ENCODE measurements at regions of chr9 and their contacts with region 1.

Region 1: DNA sequence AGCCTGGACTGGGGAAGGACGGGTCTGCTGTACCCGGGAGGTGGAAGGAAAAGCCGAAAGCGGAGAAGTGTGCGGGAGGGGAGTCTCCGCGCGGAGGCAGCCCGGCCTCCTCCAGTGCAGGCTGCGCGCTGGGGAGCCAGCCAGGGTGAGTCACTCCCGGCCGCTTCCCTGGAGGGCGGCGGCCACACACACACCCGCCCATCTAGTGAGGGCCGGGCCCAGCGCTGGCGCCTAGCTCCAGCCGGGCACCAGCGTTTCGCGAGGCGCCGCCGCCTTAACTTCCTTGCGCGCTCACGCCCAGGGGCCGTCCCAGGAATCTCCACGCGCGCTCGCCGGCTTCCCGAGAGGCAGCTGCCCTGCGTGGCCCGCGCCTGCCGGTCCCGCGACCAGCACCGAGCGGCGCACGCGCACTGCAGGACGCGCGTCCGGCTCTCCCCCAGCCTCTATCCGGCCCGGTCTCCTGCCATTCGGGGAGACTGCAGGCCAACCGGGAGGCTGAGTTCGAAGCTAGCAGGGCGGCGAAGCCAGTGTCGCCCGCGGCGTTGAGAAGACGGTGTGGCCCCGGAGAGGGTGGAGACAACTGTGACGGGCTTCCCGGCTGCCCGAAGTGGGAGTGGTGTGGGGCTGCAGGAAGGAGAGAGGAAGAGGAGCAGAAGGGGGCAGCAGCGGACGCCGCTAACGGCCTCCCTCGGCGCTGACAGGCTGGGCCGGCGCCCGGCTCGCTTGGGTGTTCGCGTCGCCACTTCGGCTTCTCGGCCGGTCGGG is at the start of gene JAK2:
- DNase-seq: peak; percentile 73 to 88 (median 76)
- ATAC-seq: peak; percentile 93
- H3K4me3 ChIP-seq: peak within 1 kb of the TSS; percentile 74
- H3K27ac ChIP-seq: peak within 1 kb of the TSS; percentile 90
- H3K4me1 ChIP-seq: peaks cover 14 to 29% of the 10 kb centered on the region in 2 experiments; a peak in 4 of 5 replicates
- H3K27me3 ChIP-seq: no peaks in the 10 kb centered on the region
- CTCF ChIP-seq: peak; percentile 46 to 51 (median 47); a peak in 4 of 6 replicates
- EP300 ChIP-seq: no peak
- POLR2A ChIP-seq: peak; percentile 85
- RAD21 ChIP-seq: peak in 1 of 2 experiments; percentile 6; a peak in 1 of 4 replicates
- polyA plus RNA-seq, gene JAK2: 4.7 to 5.1 TPM

Region 2: GRCh38 chr9:4750023-4750673 is 234.7 kb before region 1 on chr9:
- CTCF ChIA-PET with region 1: interaction called, 3 read pairs
- POLR2A ChIA-PET with region 1: no interaction called
- in situ Hi-C with region 1: loop called (anchors 10 kb)
- intact Hi-C with region 1: no loop called
- DNase-seq: peak; percentile 19 to 69 (median 34)
- ATAC-seq: peak; percentile 86
- H3K4me3 ChIP-seq: no peak overlapping the region
- H3K27ac ChIP-seq: no peak overlapping the region
- H3K4me1 ChIP-seq: peaks cover 0 to 2% of the 10 kb centered on the region in 2 experiments; a peak in 2 of 5 replicates
- H3K27me3 ChIP-seq: no peaks in the 10 kb centered on the region
- CTCF ChIP-seq: peak; percentile 36 to 62 (median 46); a peak in 4 of 6 replicates
- EP300 ChIP-seq: no peak
- POLR2A ChIP-seq: no peak
- RAD21 ChIP-seq: peak; percentile 26 to 74; a peak in 2 of 4 replicates

Region 3: DNA sequence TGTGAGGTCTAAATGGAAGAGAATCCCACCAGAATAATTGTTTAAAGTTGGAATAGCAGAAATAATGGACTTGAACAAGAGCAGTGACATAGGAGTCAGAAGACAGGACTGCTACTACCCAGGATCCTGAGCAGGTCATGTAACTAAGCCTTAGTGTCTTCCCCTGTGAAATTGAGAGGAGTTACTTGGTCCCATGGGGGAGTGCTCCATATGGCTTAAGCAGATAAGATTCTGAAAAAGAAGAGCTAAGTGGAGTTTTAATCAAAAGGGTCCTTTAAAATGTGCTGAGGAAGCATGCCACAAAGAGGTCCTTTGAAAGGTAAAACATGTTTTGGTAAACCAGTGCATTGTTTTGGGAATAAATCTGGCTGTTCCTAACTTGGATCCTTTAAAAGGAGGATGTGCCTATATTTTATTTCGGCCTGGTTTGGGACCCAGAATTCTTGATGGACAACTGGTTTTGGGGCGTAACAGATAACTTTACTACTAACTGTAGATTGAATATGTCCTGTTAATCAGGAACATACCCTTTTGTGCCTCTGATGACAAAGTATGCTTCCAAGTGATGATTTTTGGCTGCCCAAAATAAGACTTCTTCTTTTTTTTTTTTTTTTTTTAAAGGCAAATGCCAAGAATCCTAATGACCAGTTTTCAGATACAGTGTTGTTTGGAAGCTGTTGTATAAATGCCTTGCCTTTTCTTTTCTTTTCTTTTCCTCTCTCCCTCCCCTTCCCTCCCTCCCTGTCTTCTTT is 186.3 kb before region 1 on chr9:
- CTCF ChIA-PET with region 1: no interaction called
- POLR2A ChIA-PET with region 1: interaction called, 9 read pairs
- in situ Hi-C with region 1: no loop called
- intact Hi-C with region 1: loop called (anchors 2 kb)
- DNase-seq: peak; percentile 60 to 90 (median 70)
- ATAC-seq: peak; percentile 88
- H3K4me3 ChIP-seq: peak overlapping the region; percentile 7; the same call in 1 of the 2 replicates
- H3K27ac ChIP-seq: peak overlapping the region; percentile 78
- H3K4me1 ChIP-seq: peaks cover 8 to 33% of the 10 kb centered on the region in 2 experiments; a peak in 3 of 5 replicates
- H3K27me3 ChIP-seq: no peaks in the 10 kb centered on the region
- CTCF ChIP-seq: no peak
- EP300 ChIP-seq: peak; percentile 94
- POLR2A ChIP-seq: no peak
- RAD21 ChIP-seq: 0 out of 4 replicates have a peak, but pooled peaks of 1 of the 2 experiments have one; percentile 5

Region 4: GRCh38 chr9:4862506-4863250 is 122.1 kb before region 1 on chr9:
- CTCF ChIA-PET with region 1: no interaction called
- POLR2A ChIA-PET with region 1: no interaction called
- in situ Hi-C with region 1: loop called (anchors 5 kb)
- intact Hi-C with region 1: no loop called
- DNase-seq: peak; percentile 79 to 93 (median 82)
- ATAC-seq: peak; percentile 80
- H3K4me3 ChIP-seq: no peak overlapping the region
- H3K27ac ChIP-seq: peak overlapping the region; percentile 83
- H3K4me1 ChIP-seq: peaks cover 49 to 81% of the 10 kb centered on the region in 2 experiments
- H3K27me3 ChIP-seq: no peaks in the 10 kb centered on the region
- CTCF ChIP-seq: no peak
- EP300 ChIP-seq: peak; percentile 98
- POLR2A ChIP-seq: no peak
- RAD21 ChIP-seq: peak in 1 of 2 experiments; percentile 17; a peak in 1 of 4 replicates

Region 5: DNA sequence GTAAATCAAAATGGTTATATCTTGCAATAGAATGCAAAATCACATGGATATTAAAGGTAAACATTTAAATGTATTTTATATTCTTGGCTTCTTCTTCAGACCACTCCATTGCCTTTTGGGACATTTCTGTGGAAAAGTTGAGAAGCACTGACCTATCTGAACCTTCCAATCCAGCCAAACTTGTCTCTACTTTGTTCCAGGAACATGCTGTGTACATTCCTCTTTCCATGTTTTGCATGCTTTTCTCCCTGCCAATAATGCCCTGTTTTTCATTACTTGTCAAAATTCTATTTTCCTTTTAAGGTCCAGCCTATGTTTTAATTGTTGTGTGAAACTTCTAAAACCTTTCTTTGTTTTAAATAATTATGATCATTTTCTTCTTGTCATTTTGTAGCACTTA is 28.6 kb after region 1 on chr9:
- CTCF ChIA-PET with region 1: no interaction called
- POLR2A ChIA-PET with region 1: no interaction called
- in situ Hi-C with region 1: no loop called
- intact Hi-C with region 1: no loop called
- DNase-seq: no peak
- ATAC-seq: no peak
- H3K4me3 ChIP-seq: no peak overlapping the region
- H3K27ac ChIP-seq: no peak overlapping the region
- H3K4me1 ChIP-seq: no peaks in the 10 kb centered on the region
- H3K27me3 ChIP-seq: no peaks in the 10 kb centered on the region
- CTCF ChIP-seq: no peak
- EP300 ChIP-seq: no peak
- POLR2A ChIP-seq: no peak
- RAD21 ChIP-seq: no peak

Measured in K562 (cell line).